ENCODE measurements at regions of chr5 and their contacts with region 1.

Region 1: DNA sequence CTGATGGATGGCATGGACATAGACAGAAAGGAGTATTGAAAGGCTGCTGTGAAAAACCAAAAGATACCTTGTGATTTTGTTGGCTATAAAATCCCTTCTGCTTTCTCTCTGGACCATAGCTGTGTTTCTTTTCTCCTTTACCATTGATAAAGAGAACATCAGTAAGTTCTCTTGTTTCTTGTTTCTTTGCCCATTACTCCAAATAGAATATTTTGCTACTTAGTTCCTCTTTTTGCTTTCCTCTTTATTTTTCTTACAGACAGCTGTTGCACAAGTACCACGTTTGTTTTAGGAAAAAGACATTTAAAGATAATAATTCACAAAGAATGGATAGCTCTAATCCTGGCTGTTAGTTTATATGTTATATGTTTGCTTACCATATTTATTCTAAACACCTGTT is 1129.2 kb downstream of the DTWD2 start:
- DNase-seq: no peak
- ATAC-seq: no peak
- H3K4me3 ChIP-seq: no peak overlapping the region
- H3K27ac ChIP-seq: no peak overlapping the region
- H3K4me1 ChIP-seq: no peaks in the 10 kb centered on the region
- H3K27me3 ChIP-seq: no peaks in the 10 kb centered on the region
- CTCF ChIP-seq: no peak
- POLR2A ChIP-seq: no peak
- RAD21 ChIP-seq: no peak

Region 2: GRCh38 chr5:118006219-118006618 is 147.0 kb after region 1 on chr5:
- CTCF ChIA-PET with region 1: interaction called, 10 read pairs
- POLR2A ChIA-PET with region 1: no interaction called
- dilution Hi-C with region 1: no loop called
- in situ Hi-C with region 1: no loop called
- intact Hi-C with region 1: no loop called
- DNase-seq: no peak
- ATAC-seq: no peak
- H3K4me3 ChIP-seq: no peak overlapping the region
- H3K27ac ChIP-seq: no peak overlapping the region
- H3K4me1 ChIP-seq: 0 out of 2 replicates have a peak, but pooled peaks cover 2% of the 10 kb centered on the region
- H3K27me3 ChIP-seq: no peaks in the 10 kb centered on the region
- CTCF ChIP-seq: no peak
- POLR2A ChIP-seq: no peak
- RAD21 ChIP-seq: no peak

Region 3: GRCh38 chr5:118176146-118176545 is 317.0 kb after region 1 on chr5:
- CTCF ChIA-PET with region 1: no interaction called
- POLR2A ChIA-PET with region 1: no interaction called
- dilution Hi-C with region 1: no loop called
- in situ Hi-C with region 1: no loop called
- intact Hi-C with region 1: no loop called
- DNase-seq: no peak
- ATAC-seq: no peak
- H3K4me3 ChIP-seq: no peak overlapping the region
- H3K27ac ChIP-seq: no peak overlapping the region
- H3K4me1 ChIP-seq: no peaks in the 10 kb centered on the region
- H3K27me3 ChIP-seq: no peaks in the 10 kb centered on the region
- CTCF ChIP-seq: no peak
- POLR2A ChIP-seq: no peak
- RAD21 ChIP-seq: no peak

Region 4: GRCh38 chr5:119816055-119816454 is 1956.9 kb after region 1 on chr5:
- CTCF ChIA-PET with region 1: no interaction called
- POLR2A ChIA-PET with region 1: no interaction called
- dilution Hi-C with region 1: no loop called
- in situ Hi-C with region 1: no loop called
- intact Hi-C with region 1: no loop called
- DNase-seq: no peak
- ATAC-seq: no peak
- H3K4me3 ChIP-seq: no peak overlapping the region
- H3K27ac ChIP-seq: no peak overlapping the region
- H3K4me1 ChIP-seq: no peaks in the 10 kb centered on the region
- H3K27me3 ChIP-seq: no peaks in the 10 kb centered on the region
- CTCF ChIP-seq: no peak
- POLR2A ChIP-seq: no peak
- RAD21 ChIP-seq: no peak